Activated T-helper 1 cell treated with anti-CD3 and anti-CD28 coated beads, Interleukin-12 subunit alpha, Interleukin-12 subunit beta, Interleukin-2, Interleukin-4 antibody, amounts not matched to agents 30 ng/mL and 10 ng/mL and 1 ng/mL, durations not matched to agents 14 hours and 24 hours and 36 hours (primary cell): ENCODE measurements at regions of chr9 and their contacts with region 1.

Region 1: GRCh38 chr9:34328987-34329832 is at the starts of genes KIF24 and NUDT2:
- DNase-seq: peak; percentile 96
- H3K4me3 Mint-ChIP-seq: peak within 1 kb of the TSS; percentile 96
- H3K27ac Mint-ChIP-seq: peak within 1 kb of the TSS; percentile 99
- H3K4me1 Mint-ChIP-seq: peaks cover 29% of the 10 kb centered on the region
- H3K27me3 Mint-ChIP-seq: no peaks in the 10 kb centered on the region
- total RNA-seq, gene KIF24: 5.8 and 6.1 TPM in 2 replicates
- total RNA-seq, gene NUDT2: 31.0 TPM in 2 replicates

Region 2: DNA sequence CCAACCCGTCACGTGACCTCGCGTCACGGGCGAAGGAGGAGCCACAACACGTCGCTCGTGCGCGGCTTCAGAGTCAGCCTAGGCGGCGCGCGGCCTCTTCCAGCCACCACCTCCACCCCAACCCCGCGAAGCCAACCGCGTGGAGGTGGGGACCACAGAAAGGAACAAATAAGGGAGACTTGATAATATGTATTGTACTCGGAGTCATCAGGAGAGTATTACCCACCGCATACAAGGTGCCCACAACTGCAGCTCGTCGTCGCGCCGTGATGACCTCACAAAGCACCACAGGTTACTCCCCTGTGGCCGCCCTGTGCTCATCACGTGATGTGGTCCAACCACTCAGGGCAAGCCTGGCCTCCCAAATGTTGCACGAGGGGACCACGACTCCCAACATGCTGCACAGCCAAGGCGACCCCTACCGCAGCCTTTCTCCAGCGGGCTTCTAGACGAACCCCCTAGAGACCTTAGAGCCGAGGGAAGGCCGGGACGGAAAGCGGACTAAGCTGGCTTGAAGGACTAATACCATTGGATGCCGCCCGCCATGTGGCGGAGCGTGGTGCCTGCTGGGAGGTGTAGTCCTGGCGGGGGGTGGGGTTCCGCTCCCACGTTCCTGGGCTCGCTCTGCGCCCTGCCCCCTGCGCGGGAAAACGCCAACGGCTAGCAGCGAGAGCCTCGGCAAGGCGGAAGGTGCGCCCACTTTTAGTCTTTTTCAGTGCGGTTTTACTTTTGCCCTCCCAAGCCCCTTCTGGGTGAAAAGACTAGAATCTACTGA is 280.1 kb before region 1 on chr9:
- intact Hi-C with region 1: loop called (anchors 1 kb)
- DNase-seq: peak; percentile 94
- H3K4me3 Mint-ChIP-seq: peak overlapping the region; percentile 98
- H3K27ac Mint-ChIP-seq: peak overlapping the region; percentile 100
- H3K4me1 Mint-ChIP-seq: peaks cover 44% of the 10 kb centered on the region
- H3K27me3 Mint-ChIP-seq: no peaks in the 10 kb centered on the region

Region 3: GRCh38 chr9:34178520-34179212 is 150.5 kb before region 1 on chr9 and contains the start of gene UBAP1:
- intact Hi-C with region 1: loop called (anchors 2 kb)
- DNase-seq: peak; percentile 95
- H3K4me3 Mint-ChIP-seq: peak within 1 kb of the TSS; percentile 92
- H3K27ac Mint-ChIP-seq: peak within 1 kb of the TSS; percentile 94
- H3K4me1 Mint-ChIP-seq: peaks cover 5% of the 10 kb centered on the region
- H3K27me3 Mint-ChIP-seq: no peaks in the 10 kb centered on the region
- total RNA-seq, gene UBAP1: 30.0 and 33.4 TPM in 2 replicates

Region 4: GRCh38 chr9:34376596-34377403 is 47.6 kb after region 1 on chr9 and contains the start of gene MYORG:
- intact Hi-C with region 1: loop called (anchors 1 kb)
- DNase-seq: peak; percentile 97
- H3K4me3 Mint-ChIP-seq: peak within 1 kb of the TSS; percentile 88
- H3K27ac Mint-ChIP-seq: peak within 1 kb of the TSS; percentile 32
- H3K4me1 Mint-ChIP-seq: peaks cover 45% of the 10 kb centered on the region
- H3K27me3 Mint-ChIP-seq: peaks cover 13% of the 10 kb centered on the region
- total RNA-seq, gene MYORG: 1.0 and 1.9 TPM in 2 replicates

Region 5: DNA sequence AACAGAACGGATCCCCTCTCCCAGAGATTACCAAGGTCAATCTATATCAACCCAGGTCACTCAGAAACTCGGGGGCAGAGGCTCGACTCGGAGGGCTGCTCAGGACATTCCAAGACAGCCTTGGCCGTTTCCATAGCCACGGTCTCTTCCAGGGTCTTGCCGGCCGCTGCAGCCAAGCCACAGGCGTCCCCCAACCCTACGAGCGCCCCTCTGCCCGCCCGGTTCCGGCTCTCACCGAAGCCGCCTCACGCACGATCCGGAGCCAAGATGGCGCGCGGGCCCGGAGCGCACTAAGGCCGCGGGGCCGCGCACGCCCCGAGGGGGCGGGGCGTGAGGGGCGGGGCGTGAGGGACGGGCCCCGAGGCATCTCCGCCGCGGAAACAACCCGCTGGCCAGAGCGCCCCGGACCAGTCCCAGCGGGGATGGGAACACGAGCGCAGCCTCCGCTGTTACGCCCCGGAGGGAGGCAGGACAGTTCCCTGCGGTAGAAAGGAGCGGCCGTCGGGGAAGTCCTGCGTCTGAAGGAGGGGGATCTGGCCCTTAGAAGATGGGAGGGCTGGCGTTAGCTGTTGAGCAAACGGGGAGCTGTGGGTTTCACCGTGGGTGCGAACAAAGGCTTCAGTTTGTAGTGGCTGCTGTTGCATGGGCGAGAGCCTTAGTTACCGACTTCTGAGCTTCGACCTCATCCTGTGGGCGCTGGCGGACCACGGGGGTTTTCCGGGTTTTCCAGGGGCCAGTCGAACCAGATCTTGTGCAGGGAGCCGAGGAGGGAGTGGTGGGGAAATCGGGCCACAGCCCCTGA is 282.8 kb after region 1 on chr9 and contains the start of gene RPP25L:
- intact Hi-C with region 1: loop called (anchors 5 kb)
- DNase-seq: peak; percentile 84
- H3K4me3 Mint-ChIP-seq: peak within 1 kb of the TSS; percentile 95
- H3K27ac Mint-ChIP-seq: peak within 1 kb of the TSS; percentile 96
- H3K4me1 Mint-ChIP-seq: peaks cover 24% of the 10 kb centered on the region
- H3K27me3 Mint-ChIP-seq: no peaks in the 10 kb centered on the region
- total RNA-seq, gene RPP25L: 37.5 and 40.2 TPM in 2 replicates

Region 6: DNA sequence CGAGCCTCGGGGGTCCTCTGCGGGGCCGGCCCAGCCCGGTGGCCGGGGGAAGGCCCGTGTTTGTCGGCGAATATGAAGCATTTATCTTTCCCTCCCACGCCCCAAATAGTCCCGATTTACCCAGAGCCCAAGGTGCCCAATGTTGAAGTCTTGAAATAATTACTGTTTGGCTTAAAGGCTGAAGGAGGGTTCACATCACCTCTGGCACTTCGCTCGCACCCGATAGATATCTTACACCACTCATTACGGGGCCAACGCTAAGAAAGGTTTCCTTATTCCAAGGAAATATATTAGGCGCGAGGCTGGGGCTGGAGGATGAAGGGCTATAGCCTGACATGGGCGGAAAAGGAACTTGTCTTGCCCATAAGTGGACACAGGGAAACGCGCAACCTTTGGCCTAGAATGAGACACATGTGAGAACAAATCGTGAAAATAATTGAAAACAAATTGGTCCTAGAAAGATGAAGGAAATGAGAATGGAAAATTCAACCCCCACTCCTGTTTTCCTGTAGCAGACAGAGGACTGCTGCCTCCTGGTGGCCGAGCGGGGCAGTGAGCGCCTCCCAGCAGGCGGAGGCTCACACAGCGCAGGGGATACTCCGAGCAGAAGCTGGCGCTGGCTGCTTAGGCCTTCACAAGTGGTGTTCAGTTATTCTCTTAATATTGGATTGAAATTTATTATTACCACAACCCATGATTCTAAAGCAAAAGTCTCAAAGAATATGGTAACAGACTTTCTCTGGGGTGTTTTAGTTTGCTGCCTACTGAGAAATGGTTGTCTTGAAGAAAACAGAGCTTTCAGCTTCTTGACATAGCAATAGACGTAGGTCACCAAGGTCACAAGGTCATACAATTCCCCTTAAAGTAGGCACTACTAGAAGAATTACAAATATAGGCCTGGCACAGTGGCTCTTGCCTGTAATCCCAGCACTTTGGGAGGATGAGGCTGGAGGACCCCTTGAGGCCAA is 372.8 kb after region 1 on chr9:
- intact Hi-C with region 1: loop called (anchors 1 kb)
- DNase-seq: peak; percentile 66
- H3K4me3 Mint-ChIP-seq: peak overlapping the region; percentile 82
- H3K27ac Mint-ChIP-seq: peak overlapping the region; percentile 68
- H3K4me1 Mint-ChIP-seq: peaks cover 6% of the 10 kb centered on the region
- H3K27me3 Mint-ChIP-seq: peaks cover 29% of the 10 kb centered on the region